Activated naive CD4-positive, alpha-beta T cell treated with anti-CD3 and anti-CD28 coated beads for 36 hours (primary cell): ENCODE measurements at regions of chr22 and their contacts with region 1.

Region 1: GRCh38 chr22:45101515-45102227 is 62.1 kb upstream of the NUP50 start:
- DNase-seq: peak; percentile 76
- H3K4me3 Mint-ChIP-seq: no peak overlapping the region
- H3K27ac Mint-ChIP-seq: no peak overlapping the region
- H3K4me1 Mint-ChIP-seq: no peaks in the 10 kb centered on the region
- H3K27me3 Mint-ChIP-seq: peaks cover 17% of the 10 kb centered on the region

Region 2: DNA sequence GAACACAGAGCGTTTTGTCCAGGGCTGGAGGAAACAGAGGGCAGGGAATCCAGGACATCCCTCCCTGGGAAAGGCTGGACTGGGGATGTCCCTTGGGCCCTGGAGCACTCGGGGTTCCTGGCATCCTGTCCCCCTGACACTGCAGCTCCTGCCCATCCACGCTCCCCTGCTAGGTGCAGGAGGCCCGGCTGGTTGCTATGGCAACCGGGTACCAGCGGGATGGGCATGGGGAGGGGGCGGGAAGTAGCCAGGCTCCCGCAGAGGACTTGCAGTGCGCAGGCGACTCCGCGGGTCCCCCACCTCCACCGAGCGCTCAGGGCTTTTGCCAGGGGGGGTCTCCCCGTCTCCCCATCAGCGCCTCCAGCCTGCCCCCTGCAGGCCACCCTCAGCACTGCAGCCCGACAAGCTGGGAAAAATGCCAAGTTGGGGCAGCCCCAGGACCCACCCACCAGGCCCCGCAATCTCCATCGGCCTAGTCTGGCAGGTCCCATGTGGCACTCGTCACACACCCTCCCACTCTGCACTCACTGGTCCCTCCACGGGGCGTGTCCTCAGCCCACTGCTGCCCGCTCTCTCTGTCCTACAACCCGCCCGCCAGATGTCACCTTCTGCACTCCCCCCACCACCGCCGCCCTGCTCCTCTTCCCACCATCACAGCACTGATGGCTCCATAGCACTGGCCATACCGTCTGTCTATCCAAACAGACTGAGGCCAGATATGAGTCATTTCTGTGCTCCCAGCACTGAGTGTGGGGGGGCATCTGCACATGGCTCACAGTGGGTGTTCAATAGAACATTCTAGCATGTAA is 107.5 kb after region 1 on chr22:
- CTCF ChIA-PET with region 1: interaction called, 8 read pairs
- intact Hi-C with region 1: loop called (anchors 2 kb)
- DNase-seq: peak; percentile 46
- H3K4me3 Mint-ChIP-seq: no peak overlapping the region
- H3K27ac Mint-ChIP-seq: no peak overlapping the region
- H3K4me1 Mint-ChIP-seq: no peaks in the 10 kb centered on the region
- H3K27me3 Mint-ChIP-seq: no peaks in the 10 kb centered on the region

Region 3: GRCh38 chr22:45240810-45241631 is 139.3 kb after region 1 on chr22 and contains the start of gene KIAA0930:
- CTCF ChIA-PET with region 1: no interaction called
- intact Hi-C with region 1: loop called (anchors 10 kb)
- DNase-seq: peak; percentile 82
- H3K4me3 Mint-ChIP-seq: peak within 1 kb of the TSS; percentile 87
- H3K27ac Mint-ChIP-seq: peak within 1 kb of the TSS; percentile 53
- H3K4me1 Mint-ChIP-seq: peaks cover 28% of the 10 kb centered on the region
- H3K27me3 Mint-ChIP-seq: no peaks in the 10 kb centered on the region
- total RNA-seq, gene KIAA0930: 16.6 to 19.5 TPM

Region 4: GRCh38 chr22:45263463-45264269 is 162.0 kb after region 1 on chr22:
- CTCF ChIA-PET with region 1: no interaction called
- intact Hi-C with region 1: loop called (anchors 2 kb)
- DNase-seq: peak; percentile 13
- H3K4me3 Mint-ChIP-seq: no peak overlapping the region
- H3K27ac Mint-ChIP-seq: no peak overlapping the region
- H3K4me1 Mint-ChIP-seq: peaks cover 3% of the 10 kb centered on the region
- H3K27me3 Mint-ChIP-seq: peaks cover 6% of the 10 kb centered on the region

Region 5: GRCh38 chr22:45441138-45441537 is 339.5 kb after region 1 on chr22:
- CTCF ChIA-PET with region 1: no interaction called
- intact Hi-C with region 1: loop called (anchors 2 kb)
- DNase-seq: peak; percentile 59
- H3K4me3 Mint-ChIP-seq: peak overlapping the region; percentile 53
- H3K27ac Mint-ChIP-seq: no peak overlapping the region
- H3K4me1 Mint-ChIP-seq: peaks cover 10% of the 10 kb centered on the region
- H3K27me3 Mint-ChIP-seq: peaks cover 2% of the 10 kb centered on the region

Region 6: GRCh38 chr22:45553351-45554039 is 451.8 kb after region 1 on chr22:
- CTCF ChIA-PET with region 1: no interaction called
- intact Hi-C with region 1: loop called (anchors 5 kb)
- DNase-seq: peak; percentile 73
- H3K4me3 Mint-ChIP-seq: no peak overlapping the region
- H3K27ac Mint-ChIP-seq: no peak overlapping the region
- H3K4me1 Mint-ChIP-seq: peaks cover 1% of the 10 kb centered on the region
- H3K27me3 Mint-ChIP-seq: peaks cover 6% of the 10 kb centered on the region